MCF 10A (cell line): ENCODE measurements at regions of chr22 and their contacts with region 1.

Region 1: DNA sequence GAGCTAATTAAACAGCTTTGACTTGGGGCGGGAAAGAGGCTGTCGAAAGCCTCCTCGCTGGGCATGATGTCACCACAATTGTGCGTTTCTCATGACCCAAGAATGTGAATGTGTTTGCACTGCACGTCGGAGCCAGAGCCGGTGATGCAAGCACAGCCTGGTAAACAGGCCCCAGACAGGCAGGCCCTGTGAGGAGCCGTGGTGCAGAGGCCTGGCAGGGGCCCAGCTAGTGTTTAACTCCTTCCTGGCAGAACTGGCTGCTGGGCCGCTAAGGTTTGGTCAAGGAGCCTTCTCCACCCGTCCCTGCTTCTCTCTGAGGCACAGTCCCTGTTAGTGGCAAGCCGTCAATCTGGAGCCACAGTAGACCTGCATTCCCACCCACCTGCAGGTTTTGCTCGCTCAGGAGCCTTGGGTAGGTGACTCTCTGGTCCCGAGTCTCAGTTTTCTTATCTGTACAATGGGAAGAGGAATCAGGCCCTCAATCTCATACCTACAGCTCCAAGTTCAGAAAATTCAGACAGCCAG is 25.4 kb upstream of the SMTN start:
- DNase-seq: peak; percentile 97
- H3K4me3 Mint-ChIP-seq: no peak overlapping the region
- H3K27ac Mint-ChIP-seq: peak overlapping the region; percentile 84
- H3K4me1 Mint-ChIP-seq: peaks cover 9% of the 10 kb centered on the region
- H3K27me3 Mint-ChIP-seq: no peaks in the 10 kb centered on the region
- CTCF ChIP-seq: no peak

Region 2: DNA sequence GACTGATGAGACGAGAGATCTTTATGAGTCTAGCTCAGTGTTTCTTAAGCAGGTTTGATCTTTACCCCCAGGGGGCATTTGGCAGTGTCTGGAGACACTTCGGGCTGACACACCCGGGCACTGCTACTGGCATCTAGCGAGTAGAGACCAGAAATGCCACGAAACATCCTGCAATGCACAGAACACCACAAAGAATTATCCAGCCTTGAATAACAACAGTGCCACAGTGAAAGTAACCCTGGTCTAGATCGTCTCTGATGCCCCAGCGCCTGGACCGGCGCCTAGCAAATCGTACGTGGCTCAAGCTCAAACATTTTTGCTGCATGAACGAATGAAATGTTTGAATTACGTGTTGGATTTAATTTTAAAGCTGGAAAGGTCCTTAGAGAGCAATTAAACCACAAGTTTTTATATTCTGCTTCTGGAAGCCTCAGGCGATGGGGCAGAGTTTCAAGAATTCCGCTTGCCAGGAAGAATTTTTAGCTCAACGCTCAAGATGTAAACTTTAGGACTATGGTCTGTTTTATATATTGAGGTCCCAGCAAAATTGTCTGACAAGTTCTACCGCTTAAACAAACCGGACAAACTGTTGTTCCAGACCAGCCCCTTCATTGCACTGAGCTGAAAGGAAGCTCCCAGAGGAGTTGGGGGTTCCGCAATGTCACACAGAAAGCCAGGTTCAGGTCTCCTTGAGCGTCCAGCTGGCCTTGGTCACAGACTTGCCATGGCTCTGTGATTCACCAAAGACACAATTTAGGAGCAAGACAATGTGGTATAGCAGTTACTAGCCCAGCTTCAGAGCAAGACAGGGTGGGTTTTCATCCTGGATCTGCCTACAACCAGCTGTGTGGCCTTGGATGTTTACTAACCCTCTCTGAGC is 18.8 kb before region 1 on chr22:
- CTCF ChIA-PET with region 1: interaction called, 7 read pairs
- POLR2A ChIA-PET with region 1: interaction called, 10 read pairs
- intact Hi-C with region 1: no loop called
- DNase-seq: peak; percentile 78
- H3K4me3 Mint-ChIP-seq: peak overlapping the region; percentile 46
- H3K27ac Mint-ChIP-seq: peak overlapping the region; percentile 11
- H3K4me1 Mint-ChIP-seq: peaks cover 14% of the 10 kb centered on the region
- H3K27me3 Mint-ChIP-seq: no peaks in the 10 kb centered on the region
- CTCF ChIP-seq: no peak

Region 3: DNA sequence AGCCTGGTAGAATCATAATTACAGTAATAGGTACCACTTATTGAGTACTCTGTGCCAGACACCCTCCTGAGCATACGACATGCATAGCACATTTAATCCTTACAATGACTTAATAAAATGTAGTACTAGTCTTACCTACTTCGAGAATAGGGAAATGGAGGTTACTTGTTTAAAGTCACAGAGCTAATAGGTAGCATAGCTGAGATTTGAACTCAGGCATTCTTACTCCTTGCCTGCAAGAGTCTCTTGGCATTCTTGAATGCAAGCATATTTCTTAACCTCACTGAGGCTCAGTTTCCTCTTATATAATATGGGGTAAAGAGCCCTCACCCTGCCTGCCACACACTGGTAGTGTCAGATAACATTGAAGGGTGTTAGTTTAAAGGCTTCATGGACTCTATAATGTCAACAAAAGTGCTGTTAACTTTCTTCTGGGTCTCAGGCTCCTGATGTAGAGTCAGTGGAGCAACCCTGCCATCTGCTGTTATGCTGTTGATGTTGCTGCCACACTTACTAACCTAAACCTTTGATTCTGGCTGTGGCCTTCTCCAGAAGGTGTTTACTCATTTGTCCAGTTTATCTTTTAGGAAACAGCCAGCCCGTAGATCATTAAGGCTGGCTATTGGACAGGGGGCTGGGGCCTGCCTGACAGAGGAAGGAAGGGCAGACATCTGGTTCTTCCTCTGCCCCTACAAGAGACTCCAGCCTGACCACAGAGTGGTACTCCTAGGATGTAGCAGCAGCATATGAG is 175.3 kb after region 1 on chr22:
- CTCF ChIA-PET with region 1: no interaction called
- POLR2A ChIA-PET with region 1: no interaction called
- intact Hi-C with region 1: no loop called
- DNase-seq: peak; percentile 47
- H3K4me3 Mint-ChIP-seq: no peak overlapping the region
- H3K27ac Mint-ChIP-seq: peak overlapping the region; percentile 46
- H3K4me1 Mint-ChIP-seq: peaks cover 12% of the 10 kb centered on the region
- H3K27me3 Mint-ChIP-seq: no peaks in the 10 kb centered on the region
- CTCF ChIP-seq: peak; percentile 57